GM10248 (cell line): ENCODE measurements at regions of chr5 and their contacts with region 1.

Region 1: GRCh38 chr5:59188419-59189225 is 605.7 kb downstream of the RAB3C start:
- DNase-seq: peak; percentile 45
- CTCF ChIP-seq: peak; percentile 58

Region 2: DNA sequence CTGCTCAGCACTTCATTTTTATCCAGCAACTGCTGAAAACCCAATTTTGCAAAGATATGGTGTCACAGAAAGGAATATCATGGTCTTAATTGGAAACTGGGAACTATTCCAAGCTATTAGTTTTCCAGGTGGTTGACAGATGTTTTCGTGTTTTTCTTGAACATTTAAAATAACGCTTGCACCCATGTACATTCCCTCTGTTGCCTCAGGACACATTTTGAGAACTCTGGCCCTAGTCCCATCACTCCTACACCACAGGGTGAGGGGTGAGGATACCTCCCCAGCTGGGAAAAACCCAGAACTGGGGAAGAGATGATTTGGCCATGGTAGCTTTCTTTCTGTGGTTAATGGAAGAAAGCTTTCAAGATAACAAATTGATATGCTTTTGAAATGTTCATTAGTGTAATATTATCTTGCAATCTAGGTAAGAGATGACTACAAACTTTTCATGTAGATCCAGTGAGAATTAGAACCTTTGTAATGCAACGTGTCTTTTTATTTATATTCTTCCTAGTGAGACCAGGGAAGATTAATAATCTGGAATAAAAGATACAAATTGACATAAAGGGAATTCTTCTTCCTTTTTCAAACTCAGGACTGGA is 21.2 kb after region 1 on chr5:
- CTCF ChIA-PET with region 1: interaction called, 14 read pairs
- POLR2A ChIA-PET with region 1: no interaction called
- DNase-seq: no peak
- CTCF ChIP-seq: no peak

Region 3: GRCh38 chr5:59367791-59368394 is 179.3 kb after region 1 on chr5:
- CTCF ChIA-PET with region 1: interaction called, 135 read pairs
- POLR2A ChIA-PET with region 1: no interaction called
- DNase-seq: peak; percentile 16
- CTCF ChIP-seq: peak; percentile 79

Region 4: DNA sequence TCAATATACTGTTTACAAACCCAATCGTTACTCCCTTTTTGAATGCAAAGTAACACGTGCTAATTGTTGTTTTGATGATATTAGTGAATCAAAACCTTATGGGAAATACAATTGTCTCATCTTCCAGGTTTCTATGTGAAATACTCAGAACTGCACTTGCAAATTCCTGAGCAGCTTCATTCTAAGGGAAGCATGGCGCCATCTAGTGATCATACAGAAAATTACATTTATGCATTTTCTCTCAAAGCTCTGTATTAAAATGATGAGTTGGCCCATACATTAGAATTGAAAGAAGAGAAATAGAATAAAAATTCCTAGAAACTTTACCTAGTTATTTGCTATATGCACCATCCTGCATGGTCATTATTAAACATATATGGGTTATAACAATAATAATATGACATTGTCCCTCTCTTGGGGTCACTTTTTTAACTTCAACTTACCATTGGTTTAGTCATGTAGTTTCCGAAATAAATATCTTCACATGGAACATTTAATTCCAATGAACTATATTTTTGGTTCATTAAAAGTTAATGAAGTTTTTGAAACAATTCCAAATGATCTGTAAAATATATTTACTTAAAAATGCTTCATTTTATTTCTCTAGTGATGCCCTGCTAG is 484.9 kb after region 1 on chr5:
- CTCF ChIA-PET with region 1: interaction called, 13 read pairs
- POLR2A ChIA-PET with region 1: no interaction called
- DNase-seq: peak; percentile 22
- CTCF ChIP-seq: peak; percentile 62